ENCODE measurements at regions of chr19 and their contacts with region 1.

Region 1: GRCh38 chr19:18029617-18030338 is 21.8 kb downstream of the ARRDC2 start:
- DNase-seq: peak; percentile 59
- H3K4me3 ChIP-seq: no peak overlapping the region
- H3K27ac ChIP-seq: peak overlapping the region in 2 of 4 donors; percentile 11 to 15
- H3K4me1 ChIP-seq: peaks cover 0 to 13% (median 0%) of the 10 kb centered on the region in 4 donors
- H3K27me3 ChIP-seq: no peaks in the 10 kb centered on the region
- CTCF ChIP-seq: no peak
- EP300 ChIP-seq: no peak
- POLR2A ChIP-seq: no peak

Region 2: DNA sequence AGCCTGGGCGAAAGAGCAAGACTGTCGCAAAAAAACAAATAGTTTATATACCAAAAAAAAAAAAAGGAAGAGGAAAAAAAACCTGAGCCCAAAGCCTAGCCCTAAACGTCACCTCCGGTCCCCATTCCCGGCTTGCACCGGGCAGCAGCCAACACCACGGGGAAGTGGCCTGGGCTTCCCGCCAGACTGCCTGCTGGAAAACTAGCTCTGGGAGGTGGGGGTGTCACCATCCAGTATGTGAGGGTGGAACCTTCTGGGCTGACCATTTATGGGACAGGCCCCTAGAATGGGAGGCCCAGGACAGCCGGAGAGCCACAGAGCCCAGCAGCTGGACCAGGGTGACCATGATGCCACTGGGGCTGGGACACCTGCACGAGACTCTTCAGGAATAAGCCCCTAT is 19.6 kb after region 1 on chr19:
- in situ Hi-C with region 1: no loop called
- intact Hi-C with region 1: loop called (anchors 1 kb)
- DNase-seq: peak; percentile 57
- H3K4me3 ChIP-seq: no peak overlapping the region
- H3K27ac ChIP-seq: peak overlapping the region; percentile 56 to 78 (median 69)
- H3K4me1 ChIP-seq: peaks cover 16 to 49% (median 31%) of the 10 kb centered on the region in 4 donors
- H3K27me3 ChIP-seq: peaks cover 21% of the 10 kb centered on the region
- CTCF ChIP-seq: no peak
- EP300 ChIP-seq: no peak
- POLR2A ChIP-seq: no peak

Measured in transverse colon (tissue), 4 donors.